Esophagus muscularis mucosa (tissue), 4 donors: ENCODE measurements at regions of chr2 and their contacts with region 1.

Region 1: DNA sequence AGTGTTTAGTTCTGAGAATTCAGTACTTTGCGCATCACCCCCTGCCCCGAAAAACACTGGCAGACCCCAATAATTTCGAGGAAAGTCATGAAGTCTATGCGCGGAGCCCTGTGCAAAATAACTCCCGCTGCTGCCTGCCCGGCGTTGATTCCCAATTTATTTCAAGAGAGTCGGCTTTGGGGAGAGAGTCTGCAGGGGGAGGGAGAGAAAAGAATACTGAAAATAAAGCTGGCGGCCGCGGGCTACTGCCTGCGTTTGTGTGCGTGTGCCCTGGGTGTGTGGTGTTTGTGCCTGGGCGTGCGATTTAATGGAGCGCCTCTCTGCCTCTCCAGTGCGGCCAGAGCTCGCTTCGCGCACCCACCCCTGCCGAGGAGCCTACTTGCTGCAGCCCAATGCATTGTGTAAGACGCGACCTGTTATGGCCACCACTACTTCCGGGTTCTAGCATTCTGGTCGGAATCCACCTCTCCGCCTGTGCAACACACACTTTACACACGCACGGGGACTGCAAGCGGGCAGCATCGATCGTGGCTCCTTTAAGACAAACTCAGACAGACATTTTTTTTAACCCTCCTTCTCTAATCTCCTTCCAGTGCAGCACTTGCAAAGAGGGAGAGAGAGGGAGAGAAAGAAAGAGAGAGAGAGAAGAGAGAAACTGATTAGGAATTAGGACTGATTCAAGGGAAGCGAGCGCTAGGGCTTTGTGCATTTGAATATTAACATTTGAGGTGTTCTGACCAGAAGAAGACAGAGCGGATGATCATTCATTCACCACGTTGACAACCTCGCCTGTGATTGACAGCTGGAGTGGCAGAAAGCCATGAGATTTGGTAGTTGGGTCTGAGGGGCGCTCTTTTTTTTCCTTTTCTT is at the start of gene MEIS1:
- DNase-seq: peak; percentile 98
- H3K4me3 ChIP-seq: peak within 1 kb of the TSS; percentile 77 to 85 (median 80)
- H3K27ac ChIP-seq: peak within 1 kb of the TSS; percentile 86 to 98 (median 93)
- H3K4me1 ChIP-seq: peaks cover 0 to 31% (median 22%) of the 10 kb centered on the region in 4 donors
- H3K27me3 ChIP-seq: no peaks in the 10 kb centered on the region
- CTCF ChIP-seq: peak in 1 of 3 experiments; percentile 11
- EP300 ChIP-seq: no peak
- POLR2A ChIP-seq: peak; percentile 73
- total RNA-seq, gene MEIS1: 89.8 to 166 (median 132) TPM

Region 2: DNA sequence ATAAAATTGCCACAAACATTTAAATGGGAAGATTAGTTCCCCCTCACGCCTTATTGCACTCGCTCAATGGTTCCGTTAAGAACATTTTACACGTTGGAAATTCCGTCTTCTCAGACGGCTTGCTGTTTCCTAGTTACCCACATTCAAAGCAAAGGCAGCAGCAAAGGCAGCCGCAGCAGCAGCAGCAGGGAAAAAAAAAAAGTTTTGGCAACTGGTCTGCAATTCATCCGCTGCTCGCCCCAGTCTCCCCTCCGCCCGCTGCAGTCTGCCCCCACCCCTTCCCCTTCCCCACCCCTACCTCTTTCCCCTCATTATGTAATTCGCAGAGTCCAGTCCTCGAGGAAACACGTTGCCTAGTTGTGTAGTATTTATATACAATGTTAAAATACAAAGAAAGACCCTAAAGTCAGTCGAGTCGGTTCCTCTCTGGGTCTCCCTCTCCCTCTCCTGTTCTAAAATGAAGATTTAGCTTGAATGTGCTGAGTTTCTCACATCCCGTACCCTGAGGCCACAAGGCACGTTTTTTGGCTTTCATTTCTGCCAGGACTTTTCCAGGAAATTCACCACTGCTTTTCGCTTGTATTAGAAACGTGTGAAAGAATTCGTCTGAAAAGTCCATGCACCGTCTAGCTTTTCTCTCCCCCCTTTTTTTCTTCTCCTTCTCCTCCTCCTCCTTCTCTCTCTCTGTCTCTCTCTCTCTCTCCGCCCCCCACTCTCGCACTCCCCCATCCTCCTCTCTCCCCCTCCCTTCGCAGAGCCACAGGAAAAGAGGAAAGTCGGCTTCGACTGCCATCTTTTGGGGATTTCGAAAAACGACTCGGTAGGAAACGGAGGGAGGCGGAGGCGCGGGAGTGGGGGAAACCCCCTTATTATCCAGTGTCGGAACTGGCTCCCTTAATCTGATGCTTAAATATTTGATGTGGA is 140.0 kb after region 1 on chr2:
- intact Hi-C with region 1: loop called (anchors 2 kb)
- DNase-seq: peak; percentile 95
- H3K4me3 ChIP-seq: peak overlapping the region; percentile 65 to 73 (median 68)
- H3K27ac ChIP-seq: peak overlapping the region; percentile 95 to 98 (median 97)
- H3K4me1 ChIP-seq: peaks cover 22 to 98% (median 69%) of the 10 kb centered on the region in 4 donors
- H3K27me3 ChIP-seq: peaks cover 0 to 33% (median 4%) of the 10 kb centered on the region in 4 donors
- CTCF ChIP-seq: peak; percentile 46 to 69 (median 51)
- EP300 ChIP-seq: no peak
- POLR2A ChIP-seq: no peak

Region 3: DNA sequence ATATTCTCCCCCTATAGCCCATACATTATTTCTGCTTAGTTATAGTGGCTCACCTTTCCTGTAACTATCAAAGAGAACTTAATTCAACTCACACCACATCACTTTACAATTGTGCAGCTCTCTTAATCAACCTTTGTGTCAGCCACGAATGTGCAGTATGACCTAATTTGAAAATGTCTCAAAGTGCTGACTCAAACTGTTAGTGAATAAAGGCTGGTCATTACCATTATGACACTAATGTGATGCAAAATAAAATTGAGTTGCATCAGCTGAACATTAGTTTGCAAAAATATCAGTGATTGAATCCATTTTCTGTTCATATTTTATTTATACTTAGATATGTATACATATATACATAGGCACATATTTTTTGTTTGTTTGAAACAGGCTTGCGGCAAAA is 251.8 kb after region 1 on chr2:
- intact Hi-C with region 1: loop called (anchors 5 kb)
- DNase-seq: no peak
- H3K4me3 ChIP-seq: no peak overlapping the region
- H3K27ac ChIP-seq: peak overlapping the region; percentile 78 to 85 (median 84)
- H3K4me1 ChIP-seq: peaks cover 0 to 37% (median 19%) of the 10 kb centered on the region in 4 donors
- H3K27me3 ChIP-seq: no peaks in the 10 kb centered on the region
- CTCF ChIP-seq: no peak
- EP300 ChIP-seq: no peak
- POLR2A ChIP-seq: no peak

Region 4: GRCh38 chr2:67215214-67216055 is 780.5 kb after region 1 on chr2:
- intact Hi-C with region 1: loop called (anchors 5 kb)
- DNase-seq: no peak
- H3K4me3 ChIP-seq: no peak overlapping the region
- H3K27ac ChIP-seq: peak overlapping the region; percentile 62 to 75 (median 73)
- H3K4me1 ChIP-seq: peaks cover 0 to 26% (median 25%) of the 10 kb centered on the region in 4 donors
- H3K27me3 ChIP-seq: no peaks in the 10 kb centered on the region
- CTCF ChIP-seq: peak; percentile 38 to 58 (median 55)
- EP300 ChIP-seq: no peak
- POLR2A ChIP-seq: no peak

Region 5: DNA sequence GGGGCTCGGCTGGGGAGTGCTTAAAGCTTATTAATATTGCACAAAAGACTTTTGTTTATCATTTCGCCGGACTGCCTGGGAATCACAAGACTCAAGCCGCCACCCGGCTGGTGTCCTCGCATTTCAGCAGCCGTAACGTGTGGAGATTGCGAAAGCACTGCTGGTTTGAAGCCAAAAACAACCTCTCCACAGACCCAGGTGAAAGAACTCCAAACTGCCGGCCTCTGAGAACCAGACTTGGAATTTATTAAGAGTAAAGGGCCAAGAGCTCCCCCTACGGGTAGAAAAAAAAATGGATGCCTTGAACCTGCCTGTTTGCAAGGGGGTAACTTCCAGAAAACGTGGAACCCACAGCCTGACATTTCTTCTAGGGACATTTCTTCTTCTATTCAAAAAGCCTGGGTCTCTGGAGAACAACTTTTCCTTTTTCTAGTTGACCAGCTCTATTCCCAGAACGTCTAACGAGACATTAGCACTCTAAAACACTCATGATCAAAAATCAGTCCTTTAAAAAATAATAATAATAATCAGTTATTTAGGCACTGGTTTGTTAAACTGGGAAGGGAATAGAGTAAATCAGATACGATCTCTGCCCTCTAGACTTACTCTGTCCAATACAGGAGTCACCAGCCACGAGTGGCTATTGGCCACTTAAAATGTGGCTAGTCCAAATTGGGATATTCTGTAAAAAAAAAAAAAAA is 1411.6 kb after region 1 on chr2:
- intact Hi-C with region 1: loop called (anchors 5 kb)
- DNase-seq: peak; percentile 97
- H3K4me3 ChIP-seq: peak overlapping the region in 3 of 4 donors; percentile 12 to 33 (median 14)
- H3K27ac ChIP-seq: peak overlapping the region; percentile 48 to 75 (median 72)
- H3K4me1 ChIP-seq: peaks cover 9 to 25% (median 14%) of the 10 kb centered on the region in 4 donors
- H3K27me3 ChIP-seq: no peaks in the 10 kb centered on the region
- CTCF ChIP-seq: peak; percentile 84 to 90 (median 84)
- EP300 ChIP-seq: no peak
- POLR2A ChIP-seq: no peak